PC-9 (cell line): ENCODE measurements at regions of chr1 and their contacts with region 1.

Region 1: DNA sequence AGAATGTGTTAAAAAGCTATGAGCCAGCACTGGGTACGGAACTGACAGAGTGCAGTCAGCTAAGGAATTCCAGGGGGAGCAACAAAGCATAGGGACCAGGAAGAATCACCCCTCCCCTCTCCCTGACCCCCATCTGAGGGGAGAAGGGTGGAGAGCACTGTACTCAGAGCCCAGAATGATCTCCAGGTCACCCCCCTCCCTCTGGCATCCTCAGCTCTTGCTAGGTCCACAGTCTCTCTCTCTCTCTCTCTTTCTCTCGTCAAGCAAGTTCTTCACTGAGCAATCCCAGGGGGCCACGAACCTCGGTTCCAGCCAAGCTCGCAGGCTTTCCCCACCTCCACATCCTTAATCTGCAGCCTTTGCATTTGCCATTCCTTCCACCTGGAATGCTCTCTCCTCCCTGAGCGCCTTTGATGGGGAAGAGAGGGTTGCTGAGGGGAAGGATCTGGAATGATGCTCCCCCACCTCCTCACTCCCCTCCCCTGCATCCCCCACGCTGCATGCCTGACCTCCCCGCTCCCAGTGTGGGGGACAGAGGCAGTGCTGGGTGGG is 6.7 kb upstream of the WASF2 start:
- DNase-seq: no peak
- H3K4me3 ChIP-seq: no peak overlapping the region
- H3K27ac ChIP-seq: no peak overlapping the region
- H3K4me1 ChIP-seq: no peaks in the 10 kb centered on the region
- H3K27me3 ChIP-seq: no peaks in the 10 kb centered on the region
- CTCF ChIP-seq: no peak

Region 2: GRCh38 chr1:27365372-27366112 is 131.1 kb before region 1 on chr1:
- CTCF ChIA-PET with region 1: no interaction called
- POLR2A ChIA-PET with region 1: no interaction called
- intact Hi-C with region 1: no loop called
- DNase-seq: peak; percentile 51 to 80
- H3K4me3 ChIP-seq: peak overlapping the region; percentile 70
- H3K27ac ChIP-seq: no peak overlapping the region
- H3K4me1 ChIP-seq: peaks cover 9% of the 10 kb centered on the region; the same call in 1 of the 2 replicates
- H3K27me3 ChIP-seq: no peaks in the 10 kb centered on the region
- CTCF ChIP-seq: no peak

Region 3: GRCh38 chr1:27519331-27520258 is 22.9 kb after region 1 on chr1:
- CTCF ChIA-PET with region 1: interaction called, 19 read pairs
- POLR2A ChIA-PET with region 1: no interaction called
- intact Hi-C with region 1: no loop called
- DNase-seq: no peak
- H3K4me3 ChIP-seq: no peak overlapping the region
- H3K27ac ChIP-seq: no peak overlapping the region
- H3K4me1 ChIP-seq: peaks cover 21% of the 10 kb centered on the region
- H3K27me3 ChIP-seq: no peaks in the 10 kb centered on the region
- CTCF ChIP-seq: no peak

Region 4: DNA sequence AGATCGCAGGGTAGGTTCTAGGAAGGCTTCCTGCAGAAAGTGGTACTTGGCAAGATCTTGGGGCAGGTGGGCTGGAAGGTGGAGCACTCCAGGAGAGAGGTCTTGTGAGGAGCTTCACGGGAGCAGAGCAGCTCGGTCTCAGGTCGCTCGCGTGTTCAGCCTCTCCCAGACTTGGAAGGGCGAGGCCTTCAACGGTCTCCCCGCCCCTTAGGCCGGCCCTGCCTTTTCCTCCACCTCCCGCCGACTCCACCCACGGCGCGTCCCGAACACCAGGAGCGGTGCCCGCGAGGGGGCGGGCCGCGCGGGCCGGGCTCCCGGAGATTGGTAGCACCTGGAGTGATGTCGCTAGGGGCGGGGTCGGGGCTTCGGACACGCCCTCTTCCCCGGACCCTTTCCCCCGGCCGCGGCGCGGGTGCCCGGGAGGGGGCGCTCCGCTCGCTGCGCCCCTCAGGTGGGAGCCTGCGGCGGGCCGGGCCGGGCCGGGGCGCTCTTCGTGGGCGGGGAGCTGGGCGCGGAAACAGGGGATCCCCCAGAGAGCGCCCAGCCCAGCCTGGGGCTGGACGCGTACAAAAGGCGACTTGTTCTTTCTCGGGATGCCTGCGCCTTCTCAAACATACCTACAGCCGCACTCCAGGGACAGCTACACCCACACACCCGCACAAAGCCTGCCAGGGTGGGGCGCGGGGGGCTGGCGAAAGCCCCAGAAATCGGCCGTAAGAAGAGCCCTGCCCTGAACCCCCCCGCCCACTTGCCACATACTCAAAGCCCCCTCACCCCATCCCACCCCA is 71.8 kb after region 1 on chr1:
- CTCF ChIA-PET with region 1: interaction called, 18 read pairs
- POLR2A ChIA-PET with region 1: interaction called, 3 read pairs
- intact Hi-C with region 1: no loop called
- DNase-seq: peak; percentile 82 to 98
- H3K4me3 ChIP-seq: peak overlapping the region; percentile 53; the same call in 1 of the 2 replicates
- H3K27ac ChIP-seq: no peak overlapping the region
- H3K4me1 ChIP-seq: peaks cover 32% of the 10 kb centered on the region
- H3K27me3 ChIP-seq: no peaks in the 10 kb centered on the region
- CTCF ChIP-seq: peak; percentile 58